ENCODE measurements at regions of chr7 and their contacts with region 1.

Region 1: GRCh38 chr7:108016841-108017775 is 14.1 kb upstream of the LAMB1 start:
- DNase-seq: no peak
- H3K4me3 ChIP-seq: no peak overlapping the region
- H3K27ac ChIP-seq: no peak overlapping the region
- H3K27me3 ChIP-seq: no peaks in the 10 kb centered on the region
- CTCF ChIP-seq: peak; percentile 54

Region 2: GRCh38 chr7:107846324-107846723 is 170.8 kb before region 1 on chr7:
- CTCF ChIA-PET with region 1: no interaction called
- POLR2A ChIA-PET with region 1: no interaction called
- DNase-seq: no peak
- H3K4me3 ChIP-seq: no peak overlapping the region
- H3K27ac ChIP-seq: no peak overlapping the region
- H3K27me3 ChIP-seq: peaks cover 6% of the 10 kb centered on the region
- CTCF ChIP-seq: no peak

Region 3: DNA sequence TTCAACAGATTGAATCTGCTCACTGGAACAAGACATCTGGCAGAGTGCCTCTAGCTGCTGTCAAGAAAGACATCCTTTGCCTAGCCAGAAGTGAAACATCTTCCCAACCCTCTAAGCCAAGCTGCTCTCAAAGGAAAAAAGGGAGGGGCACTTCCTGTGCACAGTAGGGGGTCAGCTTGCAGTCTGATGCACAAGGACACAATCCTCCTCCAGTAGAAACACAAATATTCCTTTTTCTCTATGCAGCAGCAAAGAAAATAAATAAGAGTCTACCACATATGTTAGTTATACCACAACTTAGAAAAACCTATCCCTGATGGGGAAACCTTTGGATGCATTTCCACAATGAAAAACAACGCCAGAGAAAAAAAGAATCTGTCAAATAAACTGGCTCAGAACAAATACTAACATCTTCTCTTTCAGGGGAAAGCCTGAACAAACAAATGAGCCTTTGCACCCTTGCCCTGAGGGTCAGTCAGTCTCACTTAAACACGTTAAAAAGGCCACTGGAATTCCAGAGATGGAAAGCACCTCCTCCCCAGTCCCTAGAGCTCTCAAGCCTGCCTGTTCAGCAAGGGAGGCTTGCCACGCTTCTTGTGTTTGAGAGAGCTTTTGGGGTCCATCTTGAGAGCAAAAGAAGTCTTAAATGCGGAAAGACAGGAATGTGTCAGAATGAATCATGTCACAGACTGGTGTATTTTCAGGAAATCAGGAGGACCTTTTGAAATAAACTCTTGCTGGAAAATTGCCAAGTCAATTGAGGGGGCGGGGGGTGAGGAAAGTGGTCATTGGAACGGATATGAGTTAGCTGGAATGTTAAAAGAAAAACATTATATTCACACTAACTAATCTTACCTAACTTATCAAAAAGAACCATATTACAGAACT is 21.7 kb before region 1 on chr7:
- CTCF ChIA-PET with region 1: no interaction called
- POLR2A ChIA-PET with region 1: interaction called, 11 read pairs
- DNase-seq: no peak
- H3K4me3 ChIP-seq: no peak overlapping the region
- H3K27ac ChIP-seq: peak overlapping the region; percentile 86
- H3K27me3 ChIP-seq: no peaks in the 10 kb centered on the region
- CTCF ChIP-seq: no peak

Region 4: DNA sequence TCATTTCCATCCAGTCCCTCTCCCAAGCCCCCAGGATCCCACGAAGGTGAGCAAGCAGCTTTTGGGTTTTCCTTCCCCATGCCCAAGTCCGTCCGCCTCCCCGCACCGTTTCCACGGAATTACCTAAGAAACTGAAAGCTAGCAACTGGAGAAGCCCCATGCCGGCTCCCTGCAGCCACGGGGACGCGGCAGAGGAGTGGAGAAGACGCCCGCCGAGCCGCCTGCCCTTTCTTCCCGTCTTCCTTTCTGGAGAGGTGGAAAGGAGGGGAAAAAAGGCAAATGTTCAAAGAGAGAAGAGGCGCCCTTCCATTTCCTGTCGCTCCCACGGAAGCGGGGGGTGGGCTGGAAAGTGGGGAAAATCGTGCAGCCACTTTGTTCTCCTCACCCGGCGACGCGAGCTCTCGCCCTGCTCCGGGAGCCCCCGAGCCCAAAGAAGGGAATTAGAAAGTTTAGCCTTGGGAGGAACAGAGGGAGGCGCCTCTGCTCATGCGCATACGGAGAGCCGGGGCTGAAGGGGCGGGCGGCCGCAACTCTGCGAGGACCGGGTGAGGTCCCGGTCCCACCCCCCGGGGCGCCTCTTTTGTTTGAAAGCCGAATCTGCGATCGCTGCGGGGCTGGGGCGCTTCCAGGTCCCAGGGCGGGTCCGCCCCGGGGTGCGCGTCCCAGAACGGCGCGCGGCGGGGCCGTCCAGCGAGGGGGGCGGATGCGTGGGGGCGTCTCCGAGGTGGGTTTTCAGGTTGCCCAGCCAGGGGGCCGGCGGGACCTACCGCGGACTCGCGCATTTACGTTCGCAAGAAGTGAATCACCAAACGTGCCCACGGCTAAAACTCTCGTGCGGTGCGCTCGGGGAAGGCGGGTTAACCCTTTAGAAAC is 14.1 kb before region 1 on chr7 and contains the start of gene LAMB1:
- CTCF ChIA-PET with region 1: interaction called, 4 read pairs
- POLR2A ChIA-PET with region 1: interaction called, 11 read pairs
- DNase-seq: no peak
- H3K4me3 ChIP-seq: peak within 1 kb of the TSS; percentile 84
- H3K27ac ChIP-seq: peak within 1 kb of the TSS; percentile 86
- H3K27me3 ChIP-seq: no peaks in the 10 kb centered on the region
- CTCF ChIP-seq: no peak
- polyA plus RNA-seq, gene LAMB1: 266 and 290 TPM in 2 replicates

Region 5: DNA sequence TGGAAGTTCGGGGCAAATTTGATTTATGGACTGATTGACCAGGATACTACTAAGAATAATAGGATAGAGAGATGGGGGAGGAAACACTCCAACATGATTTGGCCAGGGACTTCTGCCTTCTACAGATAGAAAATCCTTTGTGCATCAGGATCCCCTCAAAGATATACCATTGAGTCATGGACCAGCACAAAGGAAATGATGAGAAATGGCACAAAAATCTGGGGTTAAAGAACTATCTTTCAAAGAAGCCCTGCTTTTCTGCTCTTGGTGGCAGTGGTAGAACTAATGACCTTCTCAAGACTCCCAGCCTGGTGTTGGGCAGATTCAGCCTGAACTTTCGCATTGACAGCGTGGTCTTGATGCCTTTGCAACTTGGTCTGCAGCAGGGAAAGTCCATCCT is 13.4 kb after region 1 on chr7:
- CTCF ChIA-PET with region 1: interaction called, 10 read pairs
- POLR2A ChIA-PET with region 1: no interaction called
- DNase-seq: no peak
- H3K4me3 ChIP-seq: no peak overlapping the region
- H3K27ac ChIP-seq: no peak overlapping the region
- H3K27me3 ChIP-seq: no peaks in the 10 kb centered on the region
- CTCF ChIP-seq: no peak